AG04449 (cell line): ENCODE measurements at regions of chr7 and their contacts with region 1.

Region 1: DNA sequence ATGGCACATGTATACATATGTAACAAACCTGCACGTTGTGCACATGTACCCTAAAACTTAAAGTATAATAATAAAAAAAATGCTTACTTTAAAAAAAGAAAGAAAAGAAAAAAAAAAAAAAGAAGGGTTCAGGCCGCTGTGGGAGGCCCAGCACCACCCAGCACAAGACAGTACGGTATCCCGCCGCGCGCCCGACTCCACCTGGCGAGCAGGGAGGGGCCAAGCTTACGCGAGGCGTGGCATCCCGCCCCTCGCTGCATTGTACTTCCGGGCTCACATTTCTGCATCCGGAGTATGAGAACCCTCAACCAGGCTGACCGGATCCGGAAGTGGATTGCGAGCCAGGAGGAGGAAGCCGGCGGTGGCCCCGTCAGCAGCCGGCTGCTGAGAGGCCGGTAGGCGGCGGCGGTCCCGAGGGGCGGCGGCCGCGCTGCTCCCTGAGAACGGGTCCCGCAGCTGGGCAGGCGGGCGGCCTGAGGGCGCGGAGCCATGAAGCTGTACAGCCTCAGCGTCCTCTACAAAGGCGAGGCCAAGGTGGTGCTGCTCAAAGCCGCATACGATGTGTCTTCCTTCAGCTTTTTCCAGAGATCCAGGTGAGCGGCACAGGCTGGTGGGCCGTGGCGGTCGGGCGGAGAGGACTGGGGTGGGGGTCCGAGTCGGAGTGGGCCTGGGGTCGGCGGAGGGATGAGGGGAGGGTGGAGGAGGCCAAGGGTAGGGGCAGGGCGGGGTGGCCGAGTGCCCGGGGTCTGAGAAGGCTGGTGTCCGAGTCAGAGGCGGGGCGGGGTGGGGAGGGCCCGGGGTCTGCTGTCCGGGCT is at the start of gene YKT6:
- DNase-seq: peak; percentile 41
- H3K4me3 ChIP-seq: peak within 1 kb of the TSS; percentile 100
- CTCF ChIP-seq: peak; percentile 58

Region 2: GRCh38 chr7:44067064-44067951 is 133.5 kb before region 1 on chr7:
- CTCF ChIA-PET with region 1: interaction called, 88 read pairs
- POLR2A ChIA-PET with region 1: interaction called, 5 read pairs
- DNase-seq: no peak
- H3K4me3 ChIP-seq: no peak overlapping the region
- CTCF ChIP-seq: no peak

Region 3: DNA sequence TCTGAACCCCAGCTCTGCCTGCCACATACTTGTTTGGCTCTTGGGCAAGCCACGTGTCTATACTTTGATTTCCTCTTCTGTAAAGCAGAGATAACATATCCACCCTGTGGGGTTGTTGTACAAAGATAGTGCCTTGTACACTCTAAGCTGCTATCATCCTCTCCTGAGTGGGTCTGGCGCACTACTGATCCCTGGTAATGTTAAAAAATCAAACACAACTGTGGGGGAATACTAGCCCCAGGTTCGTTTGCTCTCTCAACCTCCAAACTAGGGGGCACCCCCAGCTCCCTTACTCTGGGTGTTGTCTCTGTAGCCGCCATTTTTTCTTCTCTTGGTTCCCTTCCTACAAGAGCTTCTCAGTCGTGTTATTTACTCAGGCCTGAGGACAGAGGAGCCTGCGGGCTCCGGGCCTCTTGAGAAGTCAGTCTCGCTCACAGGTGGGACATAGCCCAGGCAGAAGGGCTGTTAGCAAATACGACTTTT is 119.5 kb before region 1 on chr7:
- CTCF ChIA-PET with region 1: interaction called, 88 read pairs
- POLR2A ChIA-PET with region 1: no interaction called
- DNase-seq: no peak
- H3K4me3 ChIP-seq: peak overlapping the region; percentile 83
- CTCF ChIP-seq: no peak

Region 4: DNA sequence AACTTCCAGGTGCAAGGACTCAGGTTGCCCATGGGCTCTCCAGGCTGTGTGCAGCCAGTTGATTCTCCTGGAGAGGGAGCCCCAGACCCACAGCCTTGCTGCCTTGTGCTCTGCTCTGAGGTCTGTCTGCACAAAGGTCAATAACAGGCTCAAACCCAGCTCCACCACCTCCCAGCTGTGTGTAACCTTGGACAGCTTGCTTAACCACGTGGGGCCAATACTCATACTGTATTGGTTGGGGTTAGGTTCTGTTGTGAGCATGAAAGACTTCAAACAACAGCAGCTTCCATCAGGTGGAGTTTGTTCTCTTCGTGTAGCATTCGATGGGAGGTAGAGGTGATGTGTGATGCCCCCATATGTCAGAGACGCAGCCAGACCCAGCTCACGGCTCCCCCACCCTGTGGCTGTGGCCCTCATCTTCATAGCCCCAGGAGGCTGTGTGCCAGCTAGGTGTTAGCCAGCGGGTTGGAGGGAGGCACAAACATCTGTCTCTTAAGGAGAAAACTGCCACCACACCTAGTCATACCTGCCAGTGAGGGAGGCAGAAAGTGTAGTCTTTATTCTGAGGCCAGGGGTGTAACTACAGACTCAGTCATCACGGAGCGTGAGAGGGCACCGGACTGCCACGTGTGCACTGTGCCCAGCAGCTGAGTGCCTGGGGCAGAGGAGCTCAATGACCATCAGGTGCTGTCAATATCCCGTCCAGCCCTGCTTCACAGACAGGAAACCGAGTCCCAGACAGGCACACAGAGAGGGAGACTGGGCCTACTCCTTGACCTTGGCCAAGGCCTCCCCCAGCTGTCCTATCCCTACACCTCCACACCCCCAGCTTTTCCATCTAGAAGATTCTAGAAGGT is 69.5 kb before region 1 on chr7:
- CTCF ChIA-PET with region 1: interaction called, 10 read pairs
- POLR2A ChIA-PET with region 1: no interaction called
- DNase-seq: no peak
- H3K4me3 ChIP-seq: no peak overlapping the region
- CTCF ChIP-seq: peak; percentile 42

Region 5: DNA sequence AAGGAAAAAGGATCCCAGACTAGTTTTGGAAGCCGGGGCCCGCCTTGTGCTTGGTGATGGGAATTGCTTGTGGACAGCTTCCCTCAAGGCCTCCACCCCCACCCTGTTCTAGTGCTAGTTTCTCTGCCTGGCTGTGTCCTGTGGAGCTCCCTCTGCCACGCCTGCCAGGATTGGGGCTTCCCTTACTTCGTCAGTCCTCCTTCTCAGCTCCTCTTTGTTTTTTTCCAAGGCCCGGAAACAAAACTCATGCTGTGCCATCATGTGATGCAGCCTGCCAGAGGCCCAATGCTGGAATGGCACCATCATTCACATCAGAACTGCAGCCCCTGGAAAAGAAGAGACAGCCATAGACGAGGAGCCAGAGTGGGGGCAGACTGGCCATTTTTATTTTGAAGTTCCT is 11.2 kb after region 1 on chr7:
- CTCF ChIA-PET with region 1: interaction called, 12 read pairs
- POLR2A ChIA-PET with region 1: interaction called, 4 read pairs
- DNase-seq: no peak
- H3K4me3 ChIP-seq: no peak overlapping the region
- CTCF ChIP-seq: no peak

Region 6: DNA sequence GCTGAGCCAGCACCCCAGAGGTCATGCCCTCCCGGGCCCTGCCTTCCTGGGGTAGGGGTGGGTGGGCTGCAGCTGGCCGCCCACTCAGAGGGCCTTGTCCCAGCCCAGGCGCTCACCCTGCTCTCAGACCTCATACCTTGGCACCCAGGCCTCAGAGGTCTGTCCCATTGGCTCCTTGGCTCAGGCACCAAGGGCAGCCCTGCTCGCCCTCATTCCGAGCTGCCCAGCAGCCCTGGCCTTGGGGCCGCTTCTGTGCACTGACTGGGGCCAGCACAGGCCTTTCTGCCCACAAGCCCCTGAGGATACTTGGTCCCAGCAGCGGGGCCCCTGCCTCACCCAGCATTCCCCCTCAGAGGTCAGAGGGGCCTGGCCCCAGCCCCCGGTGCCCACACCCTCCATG is 34.2 kb after region 1 on chr7:
- CTCF ChIA-PET with region 1: no interaction called
- POLR2A ChIA-PET with region 1: no interaction called
- DNase-seq: no peak
- H3K4me3 ChIP-seq: no peak overlapping the region
- CTCF ChIP-seq: no peak